HepG2 (cell line): ENCODE measurements at regions of chr4 and their contacts with region 1.

Region 1: DNA sequence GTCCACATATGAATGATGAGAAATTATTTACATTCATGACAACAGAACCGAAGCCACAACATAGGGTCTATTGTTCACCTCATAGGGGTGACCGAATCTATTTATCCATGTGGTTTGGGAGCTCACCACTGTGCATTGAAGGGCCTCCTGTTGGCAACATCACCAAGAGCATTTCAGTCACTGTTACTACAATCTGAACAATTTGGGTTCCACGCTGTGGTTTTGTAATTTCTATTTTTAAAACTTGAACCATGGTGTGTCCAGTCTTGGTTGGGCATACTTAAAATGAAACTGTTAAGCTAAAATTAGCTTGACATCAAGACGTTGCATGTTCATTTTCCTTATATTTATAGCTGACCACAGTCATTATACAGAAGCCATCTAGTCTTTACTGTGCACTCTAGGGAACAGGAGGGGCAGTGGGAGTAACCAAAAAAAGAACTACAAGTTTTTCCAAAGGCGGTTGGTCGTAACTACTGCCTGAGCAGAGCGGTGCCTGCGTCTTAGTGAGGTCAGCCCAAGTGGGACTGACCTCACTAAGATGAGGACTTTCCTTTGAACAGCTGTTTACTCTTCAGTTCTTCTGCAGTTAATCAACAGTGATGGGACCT is 192.1 kb downstream of the SPRY1 start:
- DNase-seq: peak; percentile 86
- ATAC-seq: peak; percentile 87
- H3K4me3 ChIP-seq: no peak overlapping the region
- H3K27ac ChIP-seq: no peak overlapping the region
- H3K4me1 ChIP-seq: peaks cover 29% of the 10 kb centered on the region
- H3K27me3 ChIP-seq: no peaks in the 10 kb centered on the region
- CTCF ChIP-seq: no peak
- EP300 ChIP-seq: no peak
- POLR2A ChIP-seq: no peak
- RAD21 ChIP-seq: no peak

Region 2: DNA sequence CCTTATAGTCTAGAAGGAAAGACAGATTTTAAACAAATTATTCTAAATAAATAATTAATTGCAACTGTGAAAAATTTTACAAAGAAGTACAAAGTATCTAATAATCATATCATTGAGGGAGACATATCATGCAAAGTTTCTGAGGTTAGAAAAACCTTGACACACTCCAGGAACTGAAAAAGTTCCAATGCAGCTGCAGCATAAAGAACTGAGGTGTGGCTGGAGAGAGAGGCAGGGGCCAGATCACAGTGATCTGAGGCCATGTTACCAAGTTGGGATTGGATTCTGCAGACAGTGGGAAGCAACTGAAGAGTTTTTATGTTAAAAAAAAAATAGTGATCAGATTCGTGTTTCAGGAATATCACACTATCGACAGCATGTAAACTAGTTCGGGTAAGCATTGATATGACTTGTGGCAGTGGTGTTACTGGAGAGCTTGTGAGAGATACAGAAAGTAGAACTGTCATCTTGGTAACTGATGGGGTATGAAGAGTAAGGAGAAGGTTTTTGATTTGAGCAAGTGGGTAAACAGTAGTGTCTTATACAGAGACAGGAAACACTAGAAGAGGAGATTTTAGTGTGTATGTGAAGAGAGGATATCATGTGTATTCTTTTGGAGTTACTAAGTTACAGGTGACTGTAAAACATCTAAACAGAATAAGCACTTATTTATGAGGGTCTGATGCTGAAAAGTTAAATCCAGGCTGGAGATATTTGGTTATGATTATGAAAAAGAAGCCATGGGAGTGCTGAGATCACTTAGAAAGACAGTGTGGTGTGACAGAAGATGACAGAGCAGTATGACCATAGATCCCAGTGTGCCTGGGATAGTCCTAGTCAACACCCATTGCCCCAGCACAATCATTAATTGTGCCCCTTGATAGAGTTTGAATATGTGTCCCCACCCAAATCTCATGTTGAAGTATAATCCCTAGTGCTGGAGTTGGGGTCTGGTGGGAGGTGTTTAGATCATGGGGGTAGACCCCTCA is 207.7 kb before region 1 on chr4:
- CTCF ChIA-PET with region 1: no interaction called
- POLR2A ChIA-PET with region 1: no interaction called
- in situ Hi-C with region 1: no loop called
- intact Hi-C with region 1: no loop called
- DNase-seq: no peak
- ATAC-seq: no peak
- H3K4me3 ChIP-seq: no peak overlapping the region
- H3K27ac ChIP-seq: no peak overlapping the region
- H3K4me1 ChIP-seq: no peaks in the 10 kb centered on the region
- H3K27me3 ChIP-seq: no peaks in the 10 kb centered on the region
- CTCF ChIP-seq: no peak
- EP300 ChIP-seq: no peak
- POLR2A ChIP-seq: no peak
- RAD21 ChIP-seq: no peak

Region 3: GRCh38 chr4:123488916-123489315 is 99.8 kb before region 1 on chr4:
- CTCF ChIA-PET with region 1: no interaction called
- POLR2A ChIA-PET with region 1: no interaction called
- in situ Hi-C with region 1: no loop called
- intact Hi-C with region 1: loop called (anchors 1 kb)
- DNase-seq: peak; percentile 80
- ATAC-seq: peak; percentile 74
- H3K4me3 ChIP-seq: no peak overlapping the region
- H3K27ac ChIP-seq: peak overlapping the region; percentile 17
- H3K4me1 ChIP-seq: peaks cover 40% of the 10 kb centered on the region
- H3K27me3 ChIP-seq: no peaks in the 10 kb centered on the region
- CTCF ChIP-seq: no peak
- EP300 ChIP-seq: peak in 1 of 2 experiments; percentile 50; a peak in 2 of 4 replicates
- POLR2A ChIP-seq: no peak
- RAD21 ChIP-seq: no peak

Region 4: GRCh38 chr4:123564758-123565346 is 23.9 kb before region 1 on chr4:
- CTCF ChIA-PET with region 1: interaction called, 4 read pairs
- POLR2A ChIA-PET with region 1: no interaction called
- in situ Hi-C with region 1: no loop called
- intact Hi-C with region 1: loop called (anchors 1 kb)
- DNase-seq: peak; percentile 92
- ATAC-seq: peak; percentile 100
- H3K4me3 ChIP-seq: no peak overlapping the region
- H3K27ac ChIP-seq: no peak overlapping the region
- H3K4me1 ChIP-seq: peaks cover 35% of the 10 kb centered on the region
- H3K27me3 ChIP-seq: no peaks in the 10 kb centered on the region
- CTCF ChIP-seq: peak; percentile 92
- EP300 ChIP-seq: peak in 1 of 2 experiments; percentile 63; a peak in 2 of 4 replicates
- POLR2A ChIP-seq: no peak
- RAD21 ChIP-seq: peak; percentile 89

Region 5: GRCh38 chr4:123599920-123600810 is 11.4 kb after region 1 on chr4:
- CTCF ChIA-PET with region 1: no interaction called
- POLR2A ChIA-PET with region 1: no interaction called
- in situ Hi-C with region 1: no loop called
- intact Hi-C with region 1: loop called (anchors 1 kb)
- DNase-seq: peak; percentile 98
- ATAC-seq: peak; percentile 92
- H3K4me3 ChIP-seq: peak overlapping the region in 2 of 3 experiments; percentile 34 to 42; a peak in 2 of 6 replicates
- H3K27ac ChIP-seq: peak overlapping the region; percentile 78
- H3K4me1 ChIP-seq: peaks cover 42% of the 10 kb centered on the region
- H3K27me3 ChIP-seq: no peaks in the 10 kb centered on the region
- CTCF ChIP-seq: 0 out of 2 replicates have a peak, but pooled peaks have one; percentile 15
- EP300 ChIP-seq: peak; percentile 83 to 96; a peak in 3 of 4 replicates
- POLR2A ChIP-seq: peak in 1 of 2 experiments; percentile 69; a peak in 2 of 4 replicates
- RAD21 ChIP-seq: no peak

Region 6: GRCh38 chr4:123631786-123632692 is 43.3 kb after region 1 on chr4:
- CTCF ChIA-PET with region 1: no interaction called
- POLR2A ChIA-PET with region 1: no interaction called
- in situ Hi-C with region 1: no loop called
- intact Hi-C with region 1: no loop called
- DNase-seq: no peak
- ATAC-seq: no peak
- H3K4me3 ChIP-seq: no peak overlapping the region
- H3K27ac ChIP-seq: no peak overlapping the region
- H3K4me1 ChIP-seq: peaks cover 6% of the 10 kb centered on the region; the same call in 1 of the 2 replicates
- H3K27me3 ChIP-seq: no peaks in the 10 kb centered on the region
- CTCF ChIP-seq: no peak
- EP300 ChIP-seq: no peak
- POLR2A ChIP-seq: no peak
- RAD21 ChIP-seq: no peak

Region 7: DNA sequence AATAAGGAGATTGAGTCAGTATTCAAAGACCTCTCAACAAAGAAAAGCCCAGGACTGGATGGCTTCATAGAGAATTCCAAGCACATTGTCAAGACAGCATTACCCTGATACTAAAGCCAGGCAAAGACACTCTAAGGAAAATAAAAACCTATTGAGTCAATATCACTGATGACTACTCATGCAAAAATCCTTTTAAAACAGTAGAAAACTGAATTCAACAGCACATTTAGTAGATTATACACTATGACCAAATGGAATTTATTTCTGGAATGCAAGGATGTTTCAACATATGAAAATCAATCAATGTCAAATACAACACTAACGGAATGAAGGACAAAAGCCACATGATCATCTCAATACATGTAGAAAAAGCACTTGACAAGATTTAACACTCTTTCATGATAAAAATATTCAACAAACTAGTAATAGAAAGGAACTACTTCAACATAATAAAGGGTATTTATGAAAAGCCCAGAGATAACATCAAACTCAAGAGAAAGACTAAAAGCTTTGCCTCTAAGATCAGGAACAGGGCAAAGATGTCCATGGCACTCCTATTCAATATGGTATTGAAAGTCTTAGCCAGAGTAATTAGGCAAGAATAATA is 490.5 kb after region 1 on chr4:
- CTCF ChIA-PET with region 1: no interaction called
- POLR2A ChIA-PET with region 1: no interaction called
- in situ Hi-C with region 1: no loop called
- intact Hi-C with region 1: no loop called
- DNase-seq: no peak
- ATAC-seq: no peak
- H3K4me3 ChIP-seq: no peak overlapping the region
- H3K27ac ChIP-seq: no peak overlapping the region
- H3K4me1 ChIP-seq: no peaks in the 10 kb centered on the region
- H3K27me3 ChIP-seq: no peaks in the 10 kb centered on the region; a peak in 1 of 5 replicates
- CTCF ChIP-seq: no peak
- EP300 ChIP-seq: no peak
- POLR2A ChIP-seq: no peak
- RAD21 ChIP-seq: no peak